ENCODE measurements at regions of chr2 and their contacts with region 1.

Region 1: DNA sequence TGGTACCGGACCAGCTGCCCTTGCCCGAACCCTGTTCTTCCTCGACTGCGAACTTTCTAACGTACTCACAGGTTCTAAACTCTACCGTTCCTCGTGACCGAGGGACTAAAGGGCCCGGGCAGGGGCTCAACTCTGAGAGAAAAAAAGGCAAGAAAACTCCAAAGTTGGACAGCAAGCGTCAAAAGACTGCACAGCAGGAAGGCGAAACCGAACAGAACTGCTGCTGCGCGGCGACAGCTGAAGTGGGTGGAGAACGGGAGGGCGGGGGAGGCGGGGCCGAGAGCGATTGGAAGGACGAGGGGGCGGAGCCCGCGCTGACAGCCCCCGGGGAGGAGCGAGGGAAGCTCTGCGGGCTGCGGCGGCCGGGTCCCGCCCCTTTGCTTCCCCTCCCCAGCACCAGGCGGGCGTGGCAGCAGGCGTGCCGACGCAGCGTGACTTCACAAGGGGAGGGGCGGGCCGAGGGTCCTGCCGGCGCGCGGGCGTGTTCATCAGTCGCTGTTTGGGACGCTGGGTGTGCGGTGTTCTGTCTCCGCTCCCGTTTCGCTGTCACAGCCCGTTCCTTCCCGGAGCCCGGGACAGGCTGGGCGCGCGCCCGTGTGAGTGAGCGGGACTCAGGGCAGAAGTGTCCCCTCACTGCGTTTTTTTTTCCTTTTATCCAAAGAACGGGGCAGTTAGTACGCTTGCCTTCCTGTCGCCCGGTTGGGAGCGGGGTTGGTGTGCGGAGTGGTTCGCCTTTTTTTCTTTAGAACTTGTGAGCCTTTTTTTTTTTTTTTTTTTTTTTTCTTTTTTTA is at the start of gene NABP1:
- DNase-seq: peak; percentile 97
- H3K4me3 ChIP-seq: peak within 1 kb of the TSS; percentile 54 to 93 (median 88)
- H3K27ac ChIP-seq: peak within 1 kb of the TSS; percentile 97
- H3K4me1 ChIP-seq: peaks cover 48% of the 10 kb centered on the region
- H3K27me3 ChIP-seq: no peaks in the 10 kb centered on the region
- CTCF ChIP-seq: no peak
- POLR2A ChIP-seq: peak; percentile 100
- total RNA-seq, gene NABP1: 42.4 and 47.6 TPM in 2 replicates

Region 2: GRCh38 chr2:191560411-191560980 is 117.3 kb before region 1 on chr2:
- CTCF ChIA-PET with region 1: interaction called, 19 read pairs
- POLR2A ChIA-PET with region 1: interaction called, 10 read pairs
- dilution Hi-C with region 1: no loop called
- intact Hi-C with region 1: no loop called
- DNase-seq: no peak
- H3K4me3 ChIP-seq: no peak overlapping the region
- H3K27ac ChIP-seq: no peak overlapping the region
- H3K4me1 ChIP-seq: peaks cover 6% of the 10 kb centered on the region
- H3K27me3 ChIP-seq: peaks cover 6 to 16% of the 10 kb centered on the region in 2 experiments
- CTCF ChIP-seq: no peak
- POLR2A ChIP-seq: no peak

Region 3: GRCh38 chr2:191625016-191625415 is 52.8 kb before region 1 on chr2:
- CTCF ChIA-PET with region 1: interaction called, 3 read pairs
- POLR2A ChIA-PET with region 1: interaction called, 8 read pairs
- dilution Hi-C with region 1: no loop called
- intact Hi-C with region 1: loop called (anchors 1 kb)
- DNase-seq: peak; percentile 51
- H3K4me3 ChIP-seq: no peak overlapping the region
- H3K27ac ChIP-seq: peak overlapping the region; percentile 2
- H3K4me1 ChIP-seq: peaks cover 13% of the 10 kb centered on the region
- H3K27me3 ChIP-seq: no peaks in the 10 kb centered on the region
- CTCF ChIP-seq: no peak
- POLR2A ChIP-seq: no peak

Region 4: GRCh38 chr2:191691016-191691735 is 13.3 kb after region 1 on chr2:
- CTCF ChIA-PET with region 1: interaction called, 4 read pairs
- POLR2A ChIA-PET with region 1: interaction called, 21 read pairs
- dilution Hi-C with region 1: no loop called
- intact Hi-C with region 1: loop called (anchors 1 kb)
- DNase-seq: peak; percentile 91
- H3K4me3 ChIP-seq: no peak overlapping the region
- H3K27ac ChIP-seq: peak overlapping the region; percentile 8
- H3K4me1 ChIP-seq: peaks cover 23% of the 10 kb centered on the region
- H3K27me3 ChIP-seq: no peaks in the 10 kb centered on the region
- CTCF ChIP-seq: peak; percentile 61 to 72
- POLR2A ChIP-seq: peak; percentile 71

Region 5: GRCh38 chr2:191713837-191714236 is 36.0 kb after region 1 on chr2:
- CTCF ChIA-PET with region 1: no interaction called
- POLR2A ChIA-PET with region 1: no interaction called
- dilution Hi-C with region 1: no loop called
- intact Hi-C with region 1: no loop called
- DNase-seq: no peak
- H3K4me3 ChIP-seq: no peak overlapping the region
- H3K27ac ChIP-seq: no peak overlapping the region
- H3K4me1 ChIP-seq: no peaks in the 10 kb centered on the region
- H3K27me3 ChIP-seq: peaks cover 0 to 3% of the 10 kb centered on the region in 2 experiments
- CTCF ChIP-seq: peak in 1 of 2 donors; percentile 5
- POLR2A ChIP-seq: no peak

Region 6: GRCh38 chr2:191927319-191927867 is 249.6 kb after region 1 on chr2:
- CTCF ChIA-PET with region 1: no interaction called
- POLR2A ChIA-PET with region 1: no interaction called
- dilution Hi-C with region 1: no loop called
- intact Hi-C with region 1: loop called (anchors 1 kb)
- DNase-seq: peak; percentile 99
- H3K4me3 ChIP-seq: peak overlapping the region in 1 of 3 experiments; percentile 5
- H3K27ac ChIP-seq: peak overlapping the region; percentile 84
- H3K4me1 ChIP-seq: peaks cover 48% of the 10 kb centered on the region
- H3K27me3 ChIP-seq: no peaks in the 10 kb centered on the region
- CTCF ChIP-seq: no peak
- POLR2A ChIP-seq: peak; percentile 65

Region 7: DNA sequence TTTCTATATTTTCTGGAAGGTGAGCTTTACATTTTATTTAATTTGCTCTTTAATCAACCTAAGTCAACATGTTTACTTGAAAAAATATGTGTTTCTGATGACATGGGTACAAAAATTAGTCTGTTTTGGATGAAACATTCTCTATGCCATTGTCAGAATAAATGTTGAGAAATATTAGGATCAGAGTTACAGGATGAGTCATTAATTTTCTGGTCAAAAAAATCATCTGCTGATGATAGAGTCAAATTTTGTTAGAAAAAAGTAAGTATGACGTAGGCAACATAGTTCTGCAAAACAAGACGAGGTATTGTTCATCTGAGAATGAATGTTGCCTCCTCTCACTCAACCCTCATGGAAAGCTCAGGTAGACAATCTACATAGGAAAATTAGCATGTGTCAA is 276.6 kb after region 1 on chr2:
- CTCF ChIA-PET with region 1: no interaction called
- POLR2A ChIA-PET with region 1: no interaction called
- dilution Hi-C with region 1: no loop called
- intact Hi-C with region 1: no loop called
- DNase-seq: no peak
- H3K4me3 ChIP-seq: no peak overlapping the region
- H3K27ac ChIP-seq: no peak overlapping the region
- H3K4me1 ChIP-seq: peaks cover 15% of the 10 kb centered on the region
- H3K27me3 ChIP-seq: no peaks in the 10 kb centered on the region
- CTCF ChIP-seq: no peak
- POLR2A ChIP-seq: no peak

Measured in endothelial cell of umbilical vein (primary cell).